ENCODE measurements at regions of chr1 and their contacts with region 1.

Region 1: DNA sequence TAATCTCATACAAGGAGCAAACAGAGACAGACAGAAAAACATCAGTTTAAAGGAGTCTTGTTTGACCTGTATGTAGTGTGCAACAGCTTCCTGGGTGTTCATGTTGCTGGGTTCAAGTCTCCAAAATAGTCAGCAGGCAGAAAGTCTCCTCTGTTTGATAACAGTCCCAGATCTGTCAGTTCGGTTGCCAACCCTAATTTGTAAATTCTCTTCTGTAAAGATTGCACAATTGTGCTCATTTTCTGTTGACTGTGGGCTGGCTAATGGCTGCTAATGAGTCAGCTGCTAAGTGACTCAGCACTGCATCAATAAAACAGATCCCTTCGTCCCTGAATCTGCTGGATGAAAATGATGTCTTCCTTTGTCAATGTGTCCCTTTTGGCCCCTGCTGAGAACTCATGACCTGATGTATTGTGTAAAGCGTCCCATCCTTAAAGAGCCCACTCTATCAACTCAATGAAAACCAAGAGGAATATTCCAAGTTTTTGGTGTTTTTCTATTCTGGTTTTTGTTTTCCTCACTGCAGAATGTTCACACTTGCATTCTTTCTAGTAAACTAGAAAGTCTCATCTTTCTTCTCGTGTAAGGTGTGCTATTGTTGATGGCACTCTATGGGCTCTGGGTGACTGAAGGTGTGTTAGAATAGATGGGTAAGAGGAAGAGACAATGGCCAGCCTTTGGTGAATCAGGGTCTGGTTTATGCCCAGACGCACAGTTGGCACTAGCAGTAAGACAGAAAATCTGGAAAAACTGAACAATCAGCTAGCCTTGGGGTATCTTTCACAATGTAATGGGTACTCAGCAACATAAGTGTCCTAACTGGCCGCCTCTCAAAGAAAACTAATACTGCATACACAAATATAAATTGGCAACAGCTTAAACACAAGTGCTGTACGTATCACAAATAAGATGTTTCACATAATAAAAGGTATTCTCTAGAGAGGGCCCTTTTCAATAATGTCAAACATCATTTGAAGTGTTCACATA is 75.1 kb upstream of the SIPA1L2 start:
- DNase-seq: peak; percentile 98
- H3K4me3 Mint-ChIP-seq: peak overlapping the region; percentile 30
- H3K27ac Mint-ChIP-seq: peak overlapping the region; percentile 76
- H3K4me1 Mint-ChIP-seq: peaks cover 48% of the 10 kb centered on the region
- H3K27me3 Mint-ChIP-seq: no peaks in the 10 kb centered on the region
- CTCF ChIP-seq: no peak

Region 2: GRCh38 chr1:232538224-232538942 is 166.6 kb before region 1 on chr1:
- CTCF ChIA-PET with region 1: no interaction called
- POLR2A ChIA-PET with region 1: interaction called, 6 read pairs
- intact Hi-C with region 1: loop called (anchors 5 kb)
- DNase-seq: peak; percentile 93
- H3K4me3 Mint-ChIP-seq: peak overlapping the region; percentile 48
- H3K27ac Mint-ChIP-seq: peak overlapping the region; percentile 86
- H3K4me1 Mint-ChIP-seq: peaks cover 48% of the 10 kb centered on the region
- H3K27me3 Mint-ChIP-seq: no peaks in the 10 kb centered on the region
- CTCF ChIP-seq: no peak

Region 3: DNA sequence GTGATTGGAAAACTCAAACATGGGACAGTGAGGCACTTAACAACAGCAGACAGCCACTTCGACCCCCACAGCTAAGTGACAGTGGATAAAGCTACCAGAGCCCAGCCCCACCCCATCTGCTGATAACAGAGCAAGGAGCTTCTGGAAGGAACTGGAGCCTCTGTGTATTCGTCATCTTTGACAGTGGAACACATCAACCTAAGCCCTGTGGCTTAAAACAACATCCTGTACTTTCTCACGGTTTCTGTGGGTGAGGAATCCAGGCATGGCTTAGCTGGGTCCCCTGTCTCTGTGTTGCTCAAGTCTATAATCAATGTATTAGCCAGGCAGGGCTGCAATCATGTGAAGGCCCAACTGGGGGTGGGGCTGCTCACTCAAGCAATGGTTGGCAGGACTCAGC is 56.7 kb before region 1 on chr1:
- CTCF ChIA-PET with region 1: interaction called, 8 read pairs
- POLR2A ChIA-PET with region 1: interaction called, 14 read pairs
- intact Hi-C with region 1: no loop called
- DNase-seq: no peak
- H3K4me3 Mint-ChIP-seq: no peak overlapping the region
- H3K27ac Mint-ChIP-seq: peak overlapping the region; percentile 13
- H3K4me1 Mint-ChIP-seq: peaks cover 14% of the 10 kb centered on the region
- H3K27me3 Mint-ChIP-seq: no peaks in the 10 kb centered on the region
- CTCF ChIP-seq: no peak

Region 4: GRCh38 chr1:232678186-232678935 is 26.6 kb before region 1 on chr1:
- CTCF ChIA-PET with region 1: interaction called, 7 read pairs
- POLR2A ChIA-PET with region 1: interaction called, 22 read pairs
- intact Hi-C with region 1: no loop called
- DNase-seq: peak; percentile 92
- H3K4me3 Mint-ChIP-seq: no peak overlapping the region
- H3K27ac Mint-ChIP-seq: peak overlapping the region; percentile 78
- H3K4me1 Mint-ChIP-seq: peaks cover 12% of the 10 kb centered on the region
- H3K27me3 Mint-ChIP-seq: no peaks in the 10 kb centered on the region
- CTCF ChIP-seq: no peak

Region 5: DNA sequence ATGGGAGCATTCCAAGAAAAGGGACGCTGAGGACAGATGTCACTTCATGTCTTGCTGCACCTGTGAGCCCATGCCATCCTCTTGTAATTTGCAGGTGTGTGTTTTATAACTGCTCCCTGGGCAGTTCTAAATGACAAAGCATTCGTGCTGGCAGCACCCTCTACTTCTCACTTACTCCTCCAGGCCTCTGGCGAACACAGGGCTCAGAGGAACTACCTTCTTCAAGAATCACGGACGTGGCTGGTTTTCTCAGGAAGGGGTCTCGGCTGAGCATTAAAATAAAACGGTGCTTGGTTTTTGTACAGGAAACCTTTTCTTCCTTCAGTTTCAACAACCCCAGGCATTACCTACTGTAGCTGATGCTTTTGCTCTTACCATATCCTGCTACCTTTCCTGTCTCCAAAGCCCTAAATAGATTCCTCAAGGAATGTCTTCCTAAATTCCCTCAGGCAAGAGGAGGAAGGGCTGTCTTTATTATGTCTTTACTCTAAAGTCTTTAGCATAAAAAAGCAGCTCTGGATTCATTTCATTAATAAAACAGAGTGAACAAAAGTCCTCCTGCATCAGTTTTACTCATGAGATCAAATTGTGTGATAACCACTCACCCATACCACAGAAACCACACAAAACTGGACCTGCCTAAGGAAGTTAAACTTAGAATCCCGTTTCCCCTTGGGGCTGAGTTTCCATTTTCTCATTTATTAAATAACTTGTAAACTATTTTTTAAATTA is 21.2 kb after region 1 on chr1:
- CTCF ChIA-PET with region 1: interaction called, 12 read pairs
- POLR2A ChIA-PET with region 1: interaction called, 57 read pairs
- intact Hi-C with region 1: no loop called
- DNase-seq: no peak
- H3K4me3 Mint-ChIP-seq: no peak overlapping the region
- H3K27ac Mint-ChIP-seq: peak overlapping the region; percentile 5
- H3K4me1 Mint-ChIP-seq: peaks cover 20% of the 10 kb centered on the region
- H3K27me3 Mint-ChIP-seq: no peaks in the 10 kb centered on the region
- CTCF ChIP-seq: no peak

Region 6: DNA sequence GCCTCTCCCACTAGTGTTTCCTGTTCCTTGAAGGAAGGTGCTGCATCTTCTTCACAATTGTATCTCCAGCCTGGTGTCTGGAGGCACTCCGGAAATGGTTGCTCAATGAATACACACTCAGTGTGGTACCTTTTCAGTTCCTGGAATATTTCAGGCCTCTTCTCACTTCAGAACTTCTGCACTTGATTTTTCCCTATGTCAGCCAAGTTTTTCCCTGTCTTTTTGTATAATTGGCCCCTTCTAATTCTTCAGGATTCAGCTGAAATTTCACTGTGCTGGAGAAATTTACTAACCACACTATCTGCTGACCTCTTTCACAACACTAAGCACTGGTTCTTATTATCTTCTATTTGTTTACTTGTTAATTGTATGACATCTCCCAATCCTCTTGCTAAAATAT is 39.0 kb after region 1 on chr1:
- CTCF ChIA-PET with region 1: no interaction called
- POLR2A ChIA-PET with region 1: no interaction called
- intact Hi-C with region 1: no loop called
- DNase-seq: no peak
- H3K4me3 Mint-ChIP-seq: no peak overlapping the region
- H3K27ac Mint-ChIP-seq: no peak overlapping the region
- H3K4me1 Mint-ChIP-seq: peaks cover 8% of the 10 kb centered on the region
- H3K27me3 Mint-ChIP-seq: no peaks in the 10 kb centered on the region
- CTCF ChIP-seq: no peak

Region 7: GRCh38 chr1:232868793-232869491 is 164.0 kb after region 1 on chr1:
- CTCF ChIA-PET with region 1: interaction called, 3 read pairs
- POLR2A ChIA-PET with region 1: interaction called, 16 read pairs
- intact Hi-C with region 1: loop called (anchors 5 kb)
- DNase-seq: peak; percentile 100
- H3K4me3 Mint-ChIP-seq: no peak overlapping the region
- H3K27ac Mint-ChIP-seq: peak overlapping the region; percentile 79
- H3K4me1 Mint-ChIP-seq: peaks cover 21% of the 10 kb centered on the region
- H3K27me3 Mint-ChIP-seq: no peaks in the 10 kb centered on the region
- CTCF ChIP-seq: no peak

Region 8: GRCh38 chr1:233113009-233113879 is 408.3 kb after region 1 on chr1:
- CTCF ChIA-PET with region 1: no interaction called
- POLR2A ChIA-PET with region 1: interaction called, 21 read pairs
- intact Hi-C with region 1: no loop called
- DNase-seq: peak; percentile 100
- H3K4me3 Mint-ChIP-seq: peak overlapping the region; percentile 62
- H3K27ac Mint-ChIP-seq: peak overlapping the region; percentile 90
- H3K4me1 Mint-ChIP-seq: peaks cover 63% of the 10 kb centered on the region
- H3K27me3 Mint-ChIP-seq: no peaks in the 10 kb centered on the region
- CTCF ChIP-seq: no peak

Measured in MCF 10A (cell line).